Transverse colon (tissue), 4 donors: ENCODE measurements at regions of chr15 and their contacts with region 1.

Region 1: DNA sequence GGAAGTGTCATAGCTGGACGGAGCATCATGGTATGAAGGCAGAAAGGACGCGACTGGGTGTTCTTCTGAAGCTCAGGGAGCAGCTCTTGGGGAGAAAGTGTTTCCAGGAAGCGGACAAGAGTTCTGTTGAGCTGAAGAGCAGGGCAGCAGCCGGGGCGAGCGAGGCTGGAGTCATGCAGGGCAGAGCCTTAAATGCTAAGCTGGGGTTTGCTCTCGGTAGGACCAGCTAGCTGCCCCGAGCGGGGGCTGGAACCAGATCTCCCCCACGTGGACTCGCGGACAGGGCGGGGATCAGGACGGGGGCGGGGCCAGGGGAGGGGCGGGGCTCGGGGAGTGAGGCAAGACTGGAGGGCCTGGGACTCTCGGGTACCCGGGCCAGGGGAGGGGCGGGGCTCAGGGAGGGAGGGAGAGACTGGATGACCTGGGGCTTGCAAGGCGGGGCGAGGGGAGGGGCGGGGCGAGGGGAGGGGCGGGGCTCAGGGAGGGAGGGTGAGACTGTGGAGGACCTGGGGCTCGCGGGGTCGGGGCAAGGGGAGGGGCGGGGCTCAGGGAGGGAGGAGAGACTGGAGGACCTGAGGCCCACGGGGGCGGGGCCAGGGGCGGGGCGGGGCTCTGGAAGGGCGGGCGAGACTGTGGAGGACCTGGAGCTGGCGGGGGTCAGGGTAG is 486 bp upstream of the FAH start:
- DNase-seq: peak; percentile 98
- H3K4me3 ChIP-seq: peak overlapping the region; percentile 35 to 61 (median 52)
- H3K27ac ChIP-seq: peak overlapping the region; percentile 76 to 84 (median 80)
- H3K4me1 ChIP-seq: peaks cover 0 to 14% (median 8%) of the 10 kb centered on the region in 4 donors
- H3K27me3 ChIP-seq: no peaks in the 10 kb centered on the region
- CTCF ChIP-seq: no peak
- EP300 ChIP-seq: no peak
- POLR2A ChIP-seq: no peak

Region 2: GRCh38 chr15:79849784-79850183 is 302.5 kb before region 1 on chr15:
- in situ Hi-C with region 1: no loop called
- intact Hi-C with region 1: no loop called
- DNase-seq: no peak
- H3K4me3 ChIP-seq: no peak overlapping the region
- H3K27ac ChIP-seq: no peak overlapping the region
- H3K4me1 ChIP-seq: peaks cover 0 to 2% (median 0%) of the 10 kb centered on the region in 4 donors
- H3K27me3 ChIP-seq: no peaks in the 10 kb centered on the region
- CTCF ChIP-seq: peak in 2 of 5 experiments; percentile 20 to 21
- EP300 ChIP-seq: no peak
- POLR2A ChIP-seq: no peak

Region 3: GRCh38 chr15:79896637-79897379 is 255.5 kb before region 1 on chr15 and contains the start of gene MTHFS:
- in situ Hi-C with region 1: loop called in 2 of 4 experiments (anchors 25 kb)
- intact Hi-C with region 1: no loop called
- DNase-seq: peak; percentile 87
- H3K4me3 ChIP-seq: peak within 1 kb of the TSS; percentile 51 to 79 (median 63)
- H3K27ac ChIP-seq: peak within 1 kb of the TSS; percentile 90 to 95 (median 93)
- H3K4me1 ChIP-seq: peaks cover 0 to 17% (median 12%) of the 10 kb centered on the region in 4 donors
- H3K27me3 ChIP-seq: no peaks in the 10 kb centered on the region
- CTCF ChIP-seq: peak; percentile 30 to 52 (median 42)
- EP300 ChIP-seq: no peak
- POLR2A ChIP-seq: peak; percentile 82
- total RNA-seq, gene MTHFS: 22.1 to 28.7 (median 26.9) TPM in 3 of 4 donors, not detected in the other

Region 4: DNA sequence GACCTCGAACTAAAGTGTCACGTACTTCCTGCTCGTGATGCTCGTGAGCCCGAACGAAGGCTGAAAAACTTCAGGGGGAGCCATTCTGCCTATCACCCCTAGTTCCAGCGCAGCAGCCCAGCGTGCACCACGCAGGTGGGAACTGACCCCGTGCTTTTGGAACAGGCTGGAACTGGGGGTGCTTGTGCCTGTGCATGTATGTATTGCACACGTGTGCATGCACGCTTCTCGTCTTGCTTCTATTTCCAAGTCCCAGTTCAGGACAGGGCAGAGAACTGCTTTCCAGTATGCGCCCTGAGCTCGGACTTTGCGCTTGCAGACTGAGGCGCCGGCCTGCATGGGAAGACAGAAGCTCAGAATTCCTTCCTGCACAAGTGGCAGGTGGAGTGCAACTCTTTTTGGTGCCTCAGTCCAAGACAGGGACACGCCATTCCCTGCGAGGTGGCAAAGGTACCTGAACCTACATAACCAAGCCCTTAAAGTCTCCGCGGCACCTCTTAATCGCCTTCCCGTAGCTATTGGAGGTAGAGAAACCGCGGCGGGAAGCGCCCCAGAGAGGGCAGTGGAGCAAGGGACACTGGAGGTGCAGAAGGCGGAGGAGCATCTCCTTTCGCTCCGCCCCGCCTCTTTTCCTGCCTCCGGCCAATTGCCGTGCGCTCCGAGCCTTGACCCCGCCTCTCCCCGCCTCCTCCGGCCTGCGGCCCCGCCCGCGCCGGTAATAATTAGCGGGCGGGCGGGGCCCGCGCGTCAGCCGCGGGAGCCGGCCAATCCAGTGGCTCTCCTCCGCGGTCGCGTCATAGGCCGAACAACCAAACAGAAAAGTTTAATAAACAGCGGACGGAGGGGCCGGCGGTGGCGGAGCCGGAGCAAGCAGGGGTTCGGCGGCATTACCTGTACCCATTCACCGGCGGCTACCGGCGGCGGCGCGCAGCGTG is 93.2 kb before region 1 on chr15 and contains the start of gene ZFAND6:
- in situ Hi-C with region 1: loop called in 2 of 4 experiments (anchors 25 kb)
- intact Hi-C with region 1: loop called (anchors 10 kb)
- DNase-seq: peak; percentile 98
- H3K4me3 ChIP-seq: peak within 1 kb of the TSS; percentile 67 to 99 (median 94)
- H3K27ac ChIP-seq: peak within 1 kb of the TSS; percentile 96 to 99 (median 99)
- H3K4me1 ChIP-seq: peaks cover 6 to 38% (median 26%) of the 10 kb centered on the region in 4 donors
- H3K27me3 ChIP-seq: no peaks in the 10 kb centered on the region
- CTCF ChIP-seq: peak in 1 of 5 experiments; percentile 21
- EP300 ChIP-seq: no peak
- POLR2A ChIP-seq: peak; percentile 88
- total RNA-seq, gene ZFAND6: 86.7 to 195 (median 117) TPM

Region 5: DNA sequence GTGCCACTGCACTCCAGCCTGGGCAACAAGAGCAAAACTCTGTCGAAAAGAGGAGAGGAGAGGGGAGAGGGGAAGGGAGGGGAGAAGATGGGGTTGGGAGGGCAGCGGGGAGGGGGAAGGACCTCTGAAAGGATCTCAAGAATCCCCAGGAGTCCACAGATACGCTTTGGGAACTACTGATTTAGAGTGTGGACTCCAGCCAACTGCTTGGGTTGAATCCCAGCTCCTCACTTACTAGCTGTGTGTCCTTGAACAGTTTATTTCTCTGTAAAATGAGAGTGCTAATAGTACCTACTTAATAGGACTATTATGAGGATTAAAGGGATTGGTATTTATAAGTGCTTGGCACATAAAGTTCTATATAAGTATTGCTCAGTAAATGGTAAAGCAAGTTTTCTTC is 44.5 kb before region 1 on chr15:
- in situ Hi-C with region 1: no loop called
- intact Hi-C with region 1: loop called (anchors 1 kb)
- DNase-seq: no peak
- H3K4me3 ChIP-seq: no peak overlapping the region
- H3K27ac ChIP-seq: no peak overlapping the region
- H3K4me1 ChIP-seq: peaks cover 8 to 29% (median 12%) of the 10 kb centered on the region in 4 donors
- H3K27me3 ChIP-seq: no peaks in the 10 kb centered on the region
- CTCF ChIP-seq: no peak
- EP300 ChIP-seq: no peak
- POLR2A ChIP-seq: no peak

Region 6: DNA sequence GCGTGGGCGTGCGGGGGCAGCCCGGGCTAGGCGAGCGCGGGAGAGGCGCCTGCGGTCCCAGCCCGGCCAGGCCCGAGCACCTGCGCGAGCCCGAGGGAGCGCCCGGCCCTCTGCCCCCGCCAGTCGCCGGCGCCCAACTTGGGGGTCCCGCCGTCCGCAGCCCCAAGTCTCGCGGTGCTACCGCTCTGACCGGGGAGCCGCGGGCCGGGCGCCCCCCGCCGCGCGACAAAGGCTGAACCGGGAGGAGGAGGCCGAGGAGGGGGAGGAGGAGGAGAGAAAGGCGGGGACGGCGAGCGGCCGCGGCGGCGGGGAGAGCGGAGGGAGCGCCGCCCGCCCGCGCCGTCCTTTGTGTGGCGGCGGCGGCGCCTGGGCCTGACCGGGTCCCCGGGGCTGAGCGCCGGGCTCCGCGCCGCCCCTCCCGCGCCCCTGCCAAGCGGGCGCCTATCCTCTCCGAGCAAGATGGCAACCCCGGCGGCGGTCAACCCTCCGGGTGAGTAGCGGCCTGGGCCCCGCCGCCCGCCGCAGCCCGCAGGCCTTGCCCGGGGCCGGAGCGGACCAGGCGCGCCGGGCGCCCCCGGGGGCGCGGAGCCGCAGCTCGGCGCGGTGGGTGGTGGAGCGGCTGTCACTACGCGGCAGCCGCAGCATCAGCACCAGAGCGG is 251.9 kb after region 1 on chr15 and contains the start of gene ARNT2:
- in situ Hi-C with region 1: no loop called
- intact Hi-C with region 1: no loop called
- DNase-seq: no peak
- H3K4me3 ChIP-seq: peak within 1 kb of the TSS; percentile 24 to 55 (median 51)
- H3K27ac ChIP-seq: peak within 1 kb of the TSS; percentile 24 to 55 (median 35)
- H3K4me1 ChIP-seq: peaks cover 0 to 6% (median 5%) of the 10 kb centered on the region in 4 donors
- H3K27me3 ChIP-seq: peaks cover 46% of the 10 kb centered on the region
- CTCF ChIP-seq: no peak
- EP300 ChIP-seq: no peak
- POLR2A ChIP-seq: no peak
- total RNA-seq, gene ARNT2: 1.9 to 4.0 (median 2.5) TPM in 3 of 4 donors, not detected in the other

Region 7: DNA sequence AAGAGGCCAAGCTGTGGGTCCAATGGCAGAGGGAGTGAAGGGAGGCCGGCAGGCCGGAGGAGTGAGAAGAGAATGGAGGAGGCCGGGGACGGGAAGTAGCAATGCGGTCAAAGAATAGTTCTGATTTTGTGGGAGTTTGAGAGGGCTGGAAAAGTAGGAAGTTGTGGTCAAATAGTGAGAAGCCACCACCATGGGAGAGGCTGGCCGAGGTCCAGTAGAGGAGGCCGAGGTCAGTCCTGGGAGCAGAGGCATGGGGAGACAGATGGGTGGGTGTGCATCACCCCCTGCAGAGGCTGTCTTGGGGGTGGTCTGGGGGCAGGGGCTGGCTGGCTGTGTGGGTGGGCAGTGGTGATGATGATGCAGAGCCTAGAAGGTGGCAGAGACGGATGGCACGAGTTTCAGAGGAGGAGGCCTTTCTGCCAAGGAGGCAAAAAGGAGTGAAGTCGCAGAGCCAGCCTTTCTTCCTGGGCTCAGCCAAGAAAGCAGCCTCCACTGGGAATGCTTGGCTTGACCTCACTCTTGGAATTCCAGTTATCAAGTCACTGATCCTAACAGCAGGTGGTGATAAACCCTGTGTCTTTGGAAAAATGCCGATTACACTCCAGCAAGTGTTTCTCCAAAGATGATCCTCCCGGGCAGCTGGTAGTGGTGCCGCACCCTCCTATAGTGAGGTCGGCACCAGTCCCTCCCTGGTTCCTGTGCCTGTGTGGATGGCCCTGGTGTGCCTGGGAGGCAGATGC is 309.2 kb after region 1 on chr15:
- in situ Hi-C with region 1: no loop called
- intact Hi-C with region 1: no loop called
- DNase-seq: no peak
- H3K4me3 ChIP-seq: no peak overlapping the region
- H3K27ac ChIP-seq: no peak overlapping the region
- H3K4me1 ChIP-seq: no peaks in the 10 kb centered on the region
- H3K27me3 ChIP-seq: no peaks in the 10 kb centered on the region
- CTCF ChIP-seq: no peak
- EP300 ChIP-seq: no peak
- POLR2A ChIP-seq: no peak

Region 8: DNA sequence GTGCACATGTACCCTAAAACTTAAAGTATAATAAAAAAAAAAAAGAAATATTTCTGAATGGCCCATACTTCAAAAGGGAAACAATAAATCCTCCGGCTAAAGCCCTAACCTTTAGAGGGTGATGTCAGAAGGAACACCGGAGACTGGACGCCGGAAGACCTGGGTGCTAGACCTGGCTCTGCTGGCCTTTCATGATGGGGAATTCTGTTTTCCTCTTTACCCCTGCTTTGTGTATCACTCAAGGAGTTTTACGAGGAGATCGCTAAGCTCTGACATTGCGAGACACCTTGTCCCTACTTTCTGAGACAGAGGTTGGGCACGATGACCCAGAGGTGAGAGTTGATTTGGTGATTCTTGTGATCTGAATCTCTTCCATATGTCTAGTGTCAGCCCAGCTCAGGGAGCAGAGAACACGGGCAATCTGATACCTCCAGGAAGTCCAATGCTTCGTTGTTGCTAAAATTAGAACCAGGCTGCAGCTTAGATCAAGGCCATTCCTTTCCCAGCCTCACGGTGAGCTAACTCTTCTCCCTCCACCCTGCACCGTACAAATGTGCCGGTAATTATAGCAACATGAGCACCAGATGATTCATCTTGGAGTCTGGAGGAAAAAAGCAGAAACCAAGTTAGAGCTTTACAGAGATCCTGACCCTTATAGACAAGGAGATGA is 939.7 kb after region 1 on chr15:
- in situ Hi-C with region 1: no loop called
- intact Hi-C with region 1: no loop called
- DNase-seq: no peak
- H3K4me3 ChIP-seq: no peak overlapping the region
- H3K27ac ChIP-seq: no peak overlapping the region
- H3K4me1 ChIP-seq: peaks cover 0 to 5% (median 0%) of the 10 kb centered on the region in 4 donors
- H3K27me3 ChIP-seq: no peaks in the 10 kb centered on the region
- CTCF ChIP-seq: no peak
- EP300 ChIP-seq: no peak
- POLR2A ChIP-seq: no peak